GM10248 (cell line): ENCODE measurements at regions of chr9 and their contacts with region 1.

Region 1: DNA sequence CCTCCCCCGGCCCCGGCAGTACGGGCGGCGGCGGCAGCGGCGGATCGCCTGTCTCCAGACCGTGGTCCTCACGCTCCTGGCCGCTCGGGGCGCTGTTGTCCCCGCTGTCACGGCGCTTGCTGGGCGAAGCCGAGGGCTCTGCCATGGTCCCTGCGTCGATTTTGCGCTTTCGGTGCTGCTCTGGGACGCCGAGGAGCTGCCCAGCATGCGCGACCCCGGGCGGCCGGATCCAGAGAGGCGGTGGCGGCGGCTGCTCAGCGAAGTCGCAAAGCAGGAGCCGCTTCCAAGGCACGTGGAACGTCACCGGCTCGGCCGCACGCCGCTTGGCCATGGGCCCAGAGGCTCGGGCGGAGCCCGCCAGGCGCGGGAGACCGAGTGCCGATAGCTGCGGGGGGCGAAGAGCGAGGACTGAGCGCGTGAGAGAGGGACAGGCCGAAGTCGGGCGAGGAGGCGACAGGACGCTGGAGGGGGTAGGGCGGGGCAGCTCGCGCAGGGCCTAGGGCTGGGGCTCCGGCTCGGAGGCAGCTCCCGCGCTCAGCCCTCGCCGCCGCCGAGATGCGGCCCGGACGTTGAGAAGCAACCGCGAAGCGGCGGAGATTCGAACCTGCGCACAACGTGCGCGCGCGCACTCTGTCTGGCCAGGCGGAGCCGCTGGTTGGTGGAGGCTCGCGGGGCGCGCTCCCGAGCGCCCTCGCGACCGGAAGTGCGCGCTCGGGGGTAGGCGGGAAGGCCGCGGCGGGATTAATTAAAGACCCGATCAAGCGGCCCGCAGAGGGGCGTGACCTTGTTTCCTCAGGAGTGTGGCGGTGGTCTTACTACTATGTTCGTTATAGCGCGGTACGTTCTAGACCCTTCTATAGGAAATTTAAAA is at the start of gene C9orf40:
- DNase-seq: peak; percentile 88
- CTCF ChIP-seq: peak; percentile 90

Region 2: DNA sequence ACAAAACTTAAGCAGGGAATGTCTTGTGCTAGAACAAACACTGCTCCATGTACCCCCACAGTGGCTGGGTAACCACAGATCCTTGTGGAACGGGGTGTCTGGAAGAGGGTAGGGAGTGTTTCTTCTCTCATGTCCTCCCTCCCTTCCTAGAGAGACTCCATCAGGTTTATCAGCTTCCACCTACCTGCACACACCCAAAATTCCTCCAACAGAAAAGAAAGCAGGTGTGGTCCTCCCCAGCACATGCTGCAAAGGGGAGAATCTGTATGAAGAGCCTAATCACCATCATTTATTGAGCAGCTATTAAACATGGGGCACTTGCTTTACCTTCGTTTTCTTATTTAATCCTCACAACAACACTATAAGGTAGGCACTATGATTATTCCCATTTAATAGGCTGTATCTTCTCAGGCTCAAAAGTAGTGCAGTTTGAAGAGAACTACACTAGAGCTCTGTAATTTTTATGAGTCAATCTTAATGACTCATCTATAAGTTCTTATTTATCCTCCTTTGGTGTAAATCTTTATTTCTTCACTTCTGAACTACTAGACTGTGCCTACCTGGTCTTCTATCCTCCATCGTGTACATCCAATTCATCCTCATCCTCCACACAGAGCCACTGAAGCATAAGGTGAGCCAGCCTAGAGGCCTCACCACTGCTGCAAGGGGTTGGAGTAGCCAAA is 31.4 kb before region 1 on chr9:
- CTCF ChIA-PET with region 1: no interaction called
- POLR2A ChIA-PET with region 1: no interaction called
- DNase-seq: no peak
- CTCF ChIP-seq: no peak

Region 3: GRCh38 chr9:74940600-74940999 is 11.9 kb before region 1 on chr9:
- CTCF ChIA-PET with region 1: interaction called, 26 read pairs
- POLR2A ChIA-PET with region 1: interaction called, 3 read pairs
- DNase-seq: no peak
- CTCF ChIP-seq: no peak

Region 4: DNA sequence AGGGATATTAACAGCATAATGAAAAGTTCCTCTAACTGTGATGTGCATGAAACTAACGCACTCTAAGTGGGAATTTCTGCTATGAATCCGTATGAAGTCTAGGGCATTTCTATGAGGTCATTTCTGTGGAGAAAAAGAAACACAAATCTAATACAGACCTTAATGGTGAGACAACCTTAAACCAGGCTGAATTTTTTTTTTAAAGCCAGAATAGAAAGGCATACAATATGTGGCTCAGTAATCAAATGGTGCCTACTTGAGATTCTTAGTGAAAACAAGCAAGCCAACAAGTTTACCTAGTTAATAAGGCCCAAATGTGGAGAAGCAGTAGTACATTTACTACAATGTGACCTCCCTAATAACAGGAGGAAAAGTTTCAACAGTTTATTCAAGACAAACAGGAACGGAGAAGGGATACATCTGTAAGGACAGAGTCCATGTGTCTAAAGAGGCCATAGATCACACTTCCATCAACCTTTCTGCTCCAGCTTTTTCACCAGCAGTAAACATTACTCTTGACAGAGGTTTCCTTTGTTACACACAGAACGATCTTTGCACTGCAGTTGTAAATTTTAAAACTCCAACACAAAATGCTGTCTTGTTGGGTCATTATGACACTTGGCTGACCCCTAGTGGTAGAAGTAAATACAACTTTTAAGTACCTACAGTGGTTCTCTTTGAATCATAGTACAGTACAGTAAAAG is 49.4 kb after region 1 on chr9:
- CTCF ChIA-PET with region 1: interaction called, 15 read pairs
- POLR2A ChIA-PET with region 1: no interaction called
- DNase-seq: peak; percentile 35
- CTCF ChIP-seq: peak; percentile 51

Region 5: DNA sequence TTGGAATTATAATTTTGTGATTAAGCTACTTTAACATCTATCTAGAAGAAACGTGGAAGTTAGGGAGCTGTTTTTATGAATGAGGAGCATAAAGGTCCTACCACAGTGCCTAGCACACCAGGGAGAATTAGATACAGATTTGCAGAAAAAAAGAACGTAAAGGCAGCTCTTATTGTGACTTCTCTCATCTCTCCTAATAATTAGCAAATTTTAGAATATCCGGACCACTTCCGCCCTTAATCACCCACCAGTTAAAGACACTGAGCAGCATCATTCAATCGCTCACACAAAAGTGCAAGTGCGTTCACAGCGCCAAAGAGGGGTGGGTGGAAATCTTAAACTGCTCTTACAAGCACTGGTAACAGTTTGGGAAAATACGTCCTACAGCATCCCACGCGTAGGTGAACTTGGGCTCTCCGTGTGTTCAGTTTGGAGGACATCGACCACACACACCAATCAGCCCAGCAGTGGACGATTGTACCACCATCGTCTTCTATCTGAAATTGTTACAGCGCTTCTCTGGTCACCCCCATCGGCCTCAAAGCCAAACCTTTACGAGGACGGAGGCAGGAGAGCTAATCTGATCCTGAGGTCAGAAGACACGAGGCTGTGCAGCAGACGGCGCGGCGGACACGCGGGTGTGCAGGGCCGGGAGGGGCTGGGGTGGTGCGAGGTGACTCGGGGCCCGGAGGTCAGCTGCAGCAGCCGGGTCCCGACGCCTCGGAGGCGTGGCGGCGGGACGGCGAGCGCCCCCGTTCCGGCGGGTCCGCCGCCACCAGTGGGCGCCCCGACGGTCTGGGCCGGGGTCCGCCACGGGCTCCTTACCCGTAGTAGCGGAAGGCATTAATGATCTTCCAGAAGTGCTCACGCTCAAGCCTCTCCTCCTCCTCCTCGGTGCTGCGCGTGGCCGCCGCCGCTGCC is 74.9 kb after region 1 on chr9:
- CTCF ChIA-PET with region 1: interaction called, 14 read pairs
- POLR2A ChIA-PET with region 1: no interaction called
- DNase-seq: peak; percentile 68
- CTCF ChIP-seq: no peak